Naive thymus-derived CD4-positive, alpha-beta T cell (primary cell): ENCODE measurements at regions of chr14 and their contacts with region 1.

Region 1: GRCh38 chr14:24114536-24115450 is at the starts of genes DCAF11 and NRL:
- DNase-seq: peak; percentile 97 to 100 (median 100)
- ATAC-seq: peak; percentile 90
- H3K4me3 ChIP-seq: peak within 1 kb of the TSS; percentile 99
- H3K4me3 Mint-ChIP-seq: peak within 1 kb of the TSS; percentile 93 to 100 (median 96)
- H3K27ac ChIP-seq: peak within 1 kb of the TSS; percentile 93
- H3K27ac Mint-ChIP-seq: peak within 1 kb of the TSS; percentile 96 to 100 (median 99)
- H3K4me1 ChIP-seq: peaks cover 18 to 20% of the 10 kb centered on the region in 2 donors
- H3K4me1 Mint-ChIP-seq: peaks cover 18 to 44% (median 37%) of the 10 kb centered on the region in 7 donors
- H3K27me3 ChIP-seq: no peaks in the 10 kb centered on the region
- H3K27me3 Mint-ChIP-seq: peaks cover 0 to 3% (median 0%) of the 10 kb centered on the region in 5 donors
- total RNA-seq, gene DCAF11: 71.9 to 90.1 (median 83.3) TPM
- total RNA-seq, gene NRL: 2.1 to 4.5 (median 3.8) TPM

Region 2: GRCh38 chr14:22427771-22428231 is 1687.0 kb before region 1 on chr14:
- CTCF ChIA-PET with region 1: no interaction called
- POLR2A ChIA-PET with region 1: no interaction called
- intact Hi-C with region 1: no loop called
- DNase-seq: no peak
- ATAC-seq: peak; percentile 67
- H3K4me3 ChIP-seq: no peak overlapping the region
- H3K4me3 Mint-ChIP-seq: peak overlapping the region in 1 of 10 donors; percentile 33
- H3K27ac ChIP-seq: no peak overlapping the region
- H3K27ac Mint-ChIP-seq: no peak overlapping the region
- H3K4me1 ChIP-seq: no peaks in the 10 kb centered on the region
- H3K4me1 Mint-ChIP-seq: peaks cover 0 to 13% (median 0%) of the 10 kb centered on the region in 7 donors
- H3K27me3 ChIP-seq: no peaks in the 10 kb centered on the region
- H3K27me3 Mint-ChIP-seq: no peaks in the 10 kb centered on the region

Region 3: DNA sequence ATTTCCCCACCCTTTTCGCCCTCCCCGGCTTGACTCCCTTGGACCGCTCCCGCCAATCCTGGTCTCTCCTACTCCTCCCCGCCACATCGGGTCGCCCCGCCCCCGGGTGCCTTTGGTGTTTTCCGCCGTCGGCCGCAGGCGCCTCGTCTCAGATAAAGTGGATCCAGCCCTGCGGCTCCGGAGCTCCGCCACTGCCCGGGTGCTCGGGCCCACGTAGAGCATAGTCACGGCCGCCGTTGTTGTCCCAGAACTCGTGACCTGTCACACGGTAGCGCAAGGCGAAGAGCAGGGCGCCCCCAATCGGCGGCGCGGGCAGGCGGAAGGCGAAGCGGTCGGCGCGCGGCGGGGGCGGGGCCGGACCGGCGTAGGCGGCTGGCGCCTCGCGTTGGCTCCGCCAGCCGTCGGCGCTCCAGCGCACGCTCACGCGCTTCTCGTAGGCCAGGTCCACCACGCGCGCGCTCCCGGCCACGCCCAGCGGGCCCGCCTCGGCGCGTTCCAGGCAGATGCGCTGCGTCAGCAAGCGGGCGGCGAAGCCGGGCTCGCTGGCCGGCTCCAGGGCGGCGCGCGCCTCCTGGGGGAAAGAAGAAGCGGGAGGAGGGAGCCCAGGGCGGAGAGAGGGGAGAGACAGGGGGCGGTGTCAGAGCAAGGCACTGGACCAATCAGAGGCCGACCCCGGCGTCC is 813.4 kb before region 1 on chr14:
- CTCF ChIA-PET with region 1: no interaction called
- POLR2A ChIA-PET with region 1: interaction called, 5 read pairs
- intact Hi-C with region 1: loop called (anchors 1 to 10 kb)
- DNase-seq: peak; percentile 93 to 99 (median 98)
- ATAC-seq: peak; percentile 86
- H3K4me3 ChIP-seq: peak overlapping the region; percentile 98
- H3K4me3 Mint-ChIP-seq: peak overlapping the region; percentile 89 to 100 (median 98)
- H3K27ac ChIP-seq: peak overlapping the region; percentile 95
- H3K27ac Mint-ChIP-seq: peak overlapping the region; percentile 92 to 99 (median 97)
- H3K4me1 ChIP-seq: peaks cover 0 to 15% of the 10 kb centered on the region in 2 donors
- H3K4me1 Mint-ChIP-seq: peaks cover 7 to 41% (median 26%) of the 10 kb centered on the region in 7 donors
- H3K27me3 ChIP-seq: no peaks in the 10 kb centered on the region
- H3K27me3 Mint-ChIP-seq: peaks cover 8 to 15% (median 12%) of the 10 kb centered on the region in 5 donors

Region 4: DNA sequence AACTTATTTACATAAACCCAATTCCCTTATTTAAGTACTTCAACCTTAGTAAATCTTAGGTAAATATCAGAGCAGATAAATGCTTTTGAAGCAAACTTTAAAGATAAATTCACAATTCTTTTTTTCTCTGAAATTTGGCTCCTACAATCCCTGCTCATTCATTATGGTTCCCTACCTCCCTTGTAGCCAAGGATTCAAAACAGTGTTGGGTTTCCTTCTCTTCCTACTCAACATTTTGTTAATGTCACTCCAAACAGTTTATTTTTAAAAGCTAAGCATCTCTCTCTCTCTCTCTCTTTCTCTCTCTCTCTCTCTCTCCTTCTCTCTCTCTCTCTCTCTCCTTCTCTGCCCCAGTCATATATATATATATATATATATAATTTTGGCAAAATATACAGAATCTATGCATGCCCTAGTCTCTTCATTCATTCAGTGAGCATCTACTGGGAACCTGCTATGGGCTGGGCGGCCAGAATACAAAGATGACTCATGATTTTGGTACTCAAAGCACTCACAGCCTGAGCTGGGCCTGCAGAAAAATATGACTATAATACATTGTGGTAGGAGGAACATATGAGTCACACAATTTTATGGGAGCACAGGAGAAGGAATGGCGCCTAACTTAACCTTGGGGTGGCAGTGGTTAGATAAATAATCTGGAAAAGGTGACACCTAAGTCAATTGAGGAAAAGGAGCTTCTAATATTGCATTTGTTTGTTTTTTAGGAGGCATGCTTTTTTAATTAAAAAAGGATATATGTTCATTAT is 284.9 kb before region 1 on chr14:
- CTCF ChIA-PET with region 1: no interaction called
- POLR2A ChIA-PET with region 1: no interaction called
- intact Hi-C with region 1: no loop called
- DNase-seq: no peak
- ATAC-seq: no peak
- H3K4me3 ChIP-seq: no peak overlapping the region
- H3K4me3 Mint-ChIP-seq: no peak overlapping the region
- H3K27ac ChIP-seq: no peak overlapping the region
- H3K27ac Mint-ChIP-seq: no peak overlapping the region
- H3K4me1 ChIP-seq: no peaks in the 10 kb centered on the region
- H3K4me1 Mint-ChIP-seq: peaks cover 0 to 2% (median 0%) of the 10 kb centered on the region in 7 donors
- H3K27me3 ChIP-seq: no peaks in the 10 kb centered on the region
- H3K27me3 Mint-ChIP-seq: peaks cover 0 to 8% (median 0%) of the 10 kb centered on the region in 5 donors

Region 5: DNA sequence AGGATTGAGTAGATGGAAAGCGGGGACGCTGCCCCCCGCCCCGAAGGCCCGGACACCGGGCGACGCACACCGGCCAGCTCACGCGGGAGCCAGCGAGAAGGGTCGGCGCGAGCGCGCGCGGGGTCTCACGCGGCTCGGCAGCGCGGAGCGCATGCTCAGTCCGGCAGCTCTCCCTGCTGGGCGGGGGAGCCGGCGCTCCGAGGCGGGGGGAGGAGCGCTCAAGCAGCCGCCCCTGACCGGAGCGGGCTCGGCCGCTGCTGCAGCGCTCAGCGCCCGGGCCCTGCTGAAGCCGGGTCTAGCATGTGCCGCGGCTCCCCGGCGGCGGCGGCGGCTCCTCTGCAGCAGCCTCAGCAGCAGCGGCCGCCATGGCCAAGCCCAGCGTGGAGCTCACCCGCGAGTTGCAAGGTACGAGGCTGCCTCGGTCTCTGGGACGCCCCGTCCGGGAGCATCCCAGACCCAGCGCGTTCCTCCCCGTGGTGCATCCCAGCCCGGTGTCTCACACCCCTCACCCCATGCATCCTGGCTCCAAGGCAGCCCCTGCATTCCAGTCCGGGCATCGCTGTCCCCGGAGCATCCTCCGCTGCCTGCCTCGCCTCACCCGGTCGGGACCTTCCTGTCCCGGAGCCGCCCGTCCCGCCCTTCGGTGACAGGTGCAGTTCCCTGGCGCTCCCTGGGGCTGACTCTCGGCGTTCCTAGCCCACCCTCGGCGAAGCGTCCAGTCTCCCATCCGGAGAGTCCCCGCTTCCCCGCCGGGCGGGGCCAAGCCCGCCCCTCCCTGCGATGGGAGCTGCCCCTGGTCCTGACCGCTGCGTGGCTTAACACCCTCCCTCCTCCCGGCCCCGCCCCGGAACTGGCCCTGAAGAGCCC is 62.8 kb before region 1 on chr14 and contains the start of gene CARMIL3:
- CTCF ChIA-PET with region 1: interaction called, 246 read pairs
- POLR2A ChIA-PET with region 1: interaction called, 31 read pairs
- intact Hi-C with region 1: loop called in 1 of 2 experiments (anchors 1 kb)
- DNase-seq: peak; percentile 28 to 78 (median 47)
- ATAC-seq: peak; percentile 79
- H3K4me3 ChIP-seq: peak within 1 kb of the TSS; percentile 63
- H3K4me3 Mint-ChIP-seq: peak within 1 kb of the TSS; percentile 81 to 91 (median 87)
- H3K27ac ChIP-seq: peak within 1 kb of the TSS; percentile 53
- H3K27ac Mint-ChIP-seq: peak within 1 kb of the TSS in 6 of 9 donors; percentile 46 to 67 (median 56)
- H3K4me1 ChIP-seq: peaks cover 0 to 8% of the 10 kb centered on the region in 2 donors
- H3K4me1 Mint-ChIP-seq: peaks cover 8 to 17% (median 14%) of the 10 kb centered on the region in 7 donors
- H3K27me3 ChIP-seq: no peaks in the 10 kb centered on the region
- H3K27me3 Mint-ChIP-seq: peaks cover 12 to 44% (median 19%) of the 10 kb centered on the region in 5 donors
- total RNA-seq, gene CARMIL3: 0.08 to 1.7 (median 0.27) TPM

Region 6: DNA sequence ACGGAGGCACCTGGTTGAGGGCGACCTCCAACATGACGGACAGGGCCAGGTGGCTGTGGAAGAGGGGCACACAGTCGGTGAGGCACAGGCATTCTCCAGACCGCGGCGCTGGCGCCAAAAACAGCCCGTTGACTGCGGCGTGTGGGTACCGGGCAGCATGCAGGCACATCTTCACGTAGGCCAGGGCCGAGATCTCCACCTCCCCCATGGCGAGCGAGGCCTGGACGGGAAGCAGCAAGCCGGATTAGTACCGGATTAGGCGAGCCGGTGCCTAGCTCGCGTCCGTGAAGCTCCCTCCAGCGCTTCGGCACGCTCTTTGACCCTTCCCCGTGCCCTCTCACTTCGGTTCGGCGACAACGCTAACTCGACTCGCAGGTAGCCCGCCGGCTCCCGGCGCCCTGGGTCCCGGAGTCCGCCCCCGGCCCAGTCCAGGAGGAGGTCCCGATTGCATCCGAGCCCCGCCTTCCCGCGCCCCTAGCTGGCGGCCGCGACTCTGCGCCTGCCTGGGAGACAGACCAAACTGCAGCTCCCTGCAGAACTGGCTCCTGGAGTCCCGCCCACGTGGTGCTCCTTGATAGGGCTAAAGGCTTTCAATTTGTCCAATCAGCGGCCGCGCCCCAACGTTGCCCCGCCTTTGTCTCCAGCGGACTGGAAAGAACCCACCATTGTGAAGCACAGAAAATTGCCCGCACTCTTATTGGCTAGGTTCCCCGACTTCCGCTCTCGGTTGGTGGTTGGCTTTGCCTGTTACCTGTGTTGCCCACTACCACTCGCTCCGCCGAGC is 26.5 kb after region 1 on chr14 and contains the start of gene EMC9:
- CTCF ChIA-PET with region 1: interaction called, 11 read pairs
- POLR2A ChIA-PET with region 1: interaction called, 298 read pairs
- intact Hi-C with region 1: loop called (anchors 1 kb)
- DNase-seq: peak; percentile 90 to 100 (median 99)
- ATAC-seq: peak; percentile 94
- H3K4me3 ChIP-seq: peak within 1 kb of the TSS; percentile 87
- H3K4me3 Mint-ChIP-seq: peak within 1 kb of the TSS; percentile 85 to 100 (median 94)
- H3K27ac ChIP-seq: peak within 1 kb of the TSS; percentile 83
- H3K27ac Mint-ChIP-seq: peak within 1 kb of the TSS; percentile 83 to 96 (median 93)
- H3K4me1 ChIP-seq: peaks cover 33 to 43% of the 10 kb centered on the region in 2 donors
- H3K4me1 Mint-ChIP-seq: peaks cover 47 to 87% (median 77%) of the 10 kb centered on the region in 7 donors
- H3K27me3 ChIP-seq: no peaks in the 10 kb centered on the region
- H3K27me3 Mint-ChIP-seq: no peaks in the 10 kb centered on the region
- total RNA-seq, gene EMC9: 9.0 to 25.5 (median 22.3) TPM

Region 7: GRCh38 chr14:24215495-24216344 is 100.9 kb after region 1 on chr14 and contains the start of gene MDP1:
- CTCF ChIA-PET with region 1: interaction called, 4 read pairs
- POLR2A ChIA-PET with region 1: interaction called, 25 read pairs
- intact Hi-C with region 1: loop called (anchors 1 kb)
- DNase-seq: peak; percentile 75 to 89 (median 84)
- ATAC-seq: peak; percentile 85
- H3K4me3 ChIP-seq: peak within 1 kb of the TSS; percentile 95
- H3K4me3 Mint-ChIP-seq: peak within 1 kb of the TSS; percentile 89 to 97 (median 95)
- H3K27ac ChIP-seq: peak within 1 kb of the TSS; percentile 91
- H3K27ac Mint-ChIP-seq: peak within 1 kb of the TSS; percentile 80 to 99 (median 96)
- H3K4me1 ChIP-seq: peaks cover 31 to 36% of the 10 kb centered on the region in 2 donors
- H3K4me1 Mint-ChIP-seq: peaks cover 29 to 62% (median 54%) of the 10 kb centered on the region in 7 donors
- H3K27me3 ChIP-seq: no peaks in the 10 kb centered on the region
- H3K27me3 Mint-ChIP-seq: peaks cover 0 to 2% (median 0%) of the 10 kb centered on the region in 5 donors
- total RNA-seq, gene MDP1: 5.5 to 18.5 (median 14.2) TPM

Region 8: GRCh38 chr14:24332268-24332993 is 217.6 kb after region 1 on chr14:
- CTCF ChIA-PET with region 1: no interaction called
- POLR2A ChIA-PET with region 1: no interaction called
- intact Hi-C with region 1: loop called in 1 of 2 experiments (anchors 1 kb)
- DNase-seq: peak; percentile 56 to 93 (median 87)
- ATAC-seq: peak; percentile 90
- H3K4me3 ChIP-seq: peak overlapping the region; percentile 43
- H3K4me3 Mint-ChIP-seq: peak overlapping the region; percentile 66 to 94 (median 83)
- H3K27ac ChIP-seq: no peak overlapping the region
- H3K27ac Mint-ChIP-seq: peak overlapping the region; percentile 57 to 93 (median 84)
- H3K4me1 ChIP-seq: peaks cover 37 to 59% of the 10 kb centered on the region in 2 donors
- H3K4me1 Mint-ChIP-seq: peaks cover 25 to 62% (median 40%) of the 10 kb centered on the region in 7 donors
- H3K27me3 ChIP-seq: peaks cover 7 to 13% of the 10 kb centered on the region in 2 donors
- H3K27me3 Mint-ChIP-seq: peaks cover 9 to 46% (median 17%) of the 10 kb centered on the region in 5 donors

Region 9: GRCh38 chr14:24481622-24482324 is 367.0 kb after region 1 on chr14:
- CTCF ChIA-PET with region 1: no interaction called
- POLR2A ChIA-PET with region 1: no interaction called
- intact Hi-C with region 1: no loop called
- DNase-seq: peak in 6 of 9 donors; percentile 24 to 51 (median 35)
- ATAC-seq: peak; percentile 71
- H3K4me3 ChIP-seq: peak overlapping the region; percentile 26
- H3K4me3 Mint-ChIP-seq: peak overlapping the region in 8 of 10 donors; percentile 39 to 81 (median 60)
- H3K27ac ChIP-seq: no peak overlapping the region
- H3K27ac Mint-ChIP-seq: peak overlapping the region in 7 of 9 donors; percentile 13 to 85 (median 70)
- H3K4me1 ChIP-seq: peaks cover 12 to 19% of the 10 kb centered on the region in 2 donors
- H3K4me1 Mint-ChIP-seq: peaks cover 0 to 28% (median 15%) of the 10 kb centered on the region in 7 donors
- H3K27me3 ChIP-seq: no peaks in the 10 kb centered on the region
- H3K27me3 Mint-ChIP-seq: peaks cover 0 to 3% (median 0%) of the 10 kb centered on the region in 5 donors